GM10248 (cell line): ENCODE measurements at regions of chr20 and their contacts with region 1.

Region 1: DNA sequence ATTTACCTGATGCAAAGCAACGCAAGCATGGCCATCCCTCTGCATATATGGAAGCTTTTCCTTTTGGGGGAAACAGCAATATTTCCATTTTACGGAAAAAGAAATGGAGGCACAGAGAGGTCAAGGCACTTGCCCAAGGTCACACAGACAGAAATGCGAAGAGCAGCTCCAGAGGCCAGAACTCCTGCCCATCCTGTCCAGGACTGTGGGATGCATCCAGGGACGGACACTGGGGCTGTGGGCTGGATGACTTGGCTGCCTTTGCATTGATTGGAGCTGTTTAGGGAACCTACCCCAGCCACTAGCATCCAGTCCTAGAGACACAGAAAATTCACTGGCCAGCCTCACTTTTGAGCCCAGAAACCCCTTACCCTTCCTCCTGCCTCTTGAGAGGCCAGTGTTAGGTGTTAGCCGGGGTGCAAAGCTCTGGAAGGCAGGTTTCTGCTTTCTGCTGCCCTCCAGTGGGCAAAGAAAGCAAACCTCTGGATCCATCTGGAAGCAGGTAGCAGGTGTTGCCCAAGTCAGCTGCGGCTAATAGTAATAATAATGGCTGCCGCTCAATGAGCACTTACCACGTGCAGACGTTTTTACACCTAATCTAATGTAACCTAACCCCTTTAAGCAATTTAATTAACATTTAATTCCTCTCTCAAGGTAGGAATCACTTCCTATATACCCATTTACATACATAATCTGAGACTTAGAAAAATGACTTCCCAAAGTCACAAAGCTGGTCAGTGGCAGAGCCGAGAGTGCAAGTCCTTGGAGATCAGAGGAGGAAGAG is 31.7 kb upstream of the CCN5 start:
- DNase-seq: peak; percentile 83
- CTCF ChIP-seq: peak; percentile 76

Region 2: DNA sequence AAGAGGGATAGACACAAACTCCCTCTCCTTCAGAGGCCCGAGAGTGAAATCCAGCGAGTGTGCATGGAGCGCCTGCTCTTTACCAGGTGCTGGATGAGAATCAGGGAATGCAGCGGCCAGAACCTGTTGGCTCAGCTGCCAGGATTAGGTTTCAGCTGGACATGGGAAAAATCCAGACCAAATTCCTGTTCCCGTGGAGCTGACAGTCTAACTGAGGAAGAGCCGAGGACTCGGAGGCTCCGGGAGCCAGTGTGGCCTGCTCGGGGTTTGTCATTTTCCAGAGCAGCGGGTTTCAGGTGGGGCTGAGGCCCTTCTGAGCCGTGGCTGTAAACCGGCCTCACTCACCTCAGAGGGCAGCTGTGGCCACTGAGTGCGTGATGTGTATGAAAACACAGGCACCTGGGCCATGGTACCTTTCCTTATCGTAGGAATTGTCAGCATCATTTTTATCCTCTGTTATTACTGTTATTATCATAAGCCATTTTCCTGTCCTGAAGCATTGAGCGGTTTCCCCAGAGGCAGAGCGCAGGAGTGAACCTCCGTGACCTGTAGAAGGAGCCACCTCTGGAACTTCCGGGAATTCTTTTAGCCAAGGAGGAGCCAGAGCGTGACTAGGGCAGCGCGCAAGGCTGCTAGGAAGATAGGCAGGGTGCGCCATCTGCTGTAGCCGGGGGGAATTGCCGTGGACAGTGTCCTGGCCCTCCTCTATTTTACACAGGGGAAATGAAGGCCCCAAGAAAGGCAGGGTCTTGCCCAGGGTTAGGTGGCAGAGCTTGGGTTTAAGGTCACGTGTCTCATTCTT is 73.7 kb before region 1 on chr20:
- CTCF ChIA-PET with region 1: interaction called, 17 read pairs
- POLR2A ChIA-PET with region 1: no interaction called
- DNase-seq: peak; percentile 82
- CTCF ChIP-seq: peak; percentile 95

Region 3: GRCh38 chr20:44651684-44652423 is 31.6 kb before region 1 on chr20 and contains the start of gene ADA:
- CTCF ChIA-PET with region 1: interaction called, 41 read pairs
- POLR2A ChIA-PET with region 1: interaction called, 3 read pairs
- DNase-seq: peak; percentile 66
- CTCF ChIP-seq: peak; percentile 12

Region 4: GRCh38 chr20:44714696-44715482 is 31.4 kb after region 1 on chr20 and contains the start of gene CCN5:
- CTCF ChIA-PET with region 1: interaction called, 11 read pairs
- POLR2A ChIA-PET with region 1: no interaction called
- DNase-seq: no peak
- CTCF ChIP-seq: no peak

Region 5: GRCh38 chr20:44747166-44748004 is 63.9 kb after region 1 on chr20:
- CTCF ChIA-PET with region 1: interaction called, 63 read pairs
- POLR2A ChIA-PET with region 1: no interaction called
- DNase-seq: peak; percentile 76
- CTCF ChIP-seq: peak; percentile 76

Region 6: DNA sequence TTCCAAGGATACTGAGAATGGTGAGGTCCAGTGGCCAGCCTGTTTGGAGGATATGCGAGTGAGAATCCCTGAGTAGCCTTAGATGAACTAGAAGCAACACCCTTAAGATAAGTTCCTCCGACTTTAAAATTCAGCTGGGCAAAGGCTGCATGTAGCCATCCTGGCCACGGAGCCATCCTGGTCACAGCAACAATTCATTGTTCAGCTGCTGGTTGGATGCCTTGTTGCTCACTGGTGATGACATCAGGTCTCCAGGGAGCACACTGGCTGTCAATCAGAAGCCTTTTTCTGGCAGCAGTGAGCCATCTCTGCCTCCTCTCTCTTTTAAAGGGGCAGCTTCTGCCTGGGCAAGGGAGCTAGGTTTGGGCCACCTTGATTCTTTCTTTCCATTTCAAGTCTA is 149.3 kb after region 1 on chr20:
- CTCF ChIA-PET with region 1: no interaction called
- POLR2A ChIA-PET with region 1: no interaction called
- DNase-seq: no peak
- CTCF ChIP-seq: no peak